ENCODE measurements at regions of chr22 and their contacts with region 1.

Region 1: DNA sequence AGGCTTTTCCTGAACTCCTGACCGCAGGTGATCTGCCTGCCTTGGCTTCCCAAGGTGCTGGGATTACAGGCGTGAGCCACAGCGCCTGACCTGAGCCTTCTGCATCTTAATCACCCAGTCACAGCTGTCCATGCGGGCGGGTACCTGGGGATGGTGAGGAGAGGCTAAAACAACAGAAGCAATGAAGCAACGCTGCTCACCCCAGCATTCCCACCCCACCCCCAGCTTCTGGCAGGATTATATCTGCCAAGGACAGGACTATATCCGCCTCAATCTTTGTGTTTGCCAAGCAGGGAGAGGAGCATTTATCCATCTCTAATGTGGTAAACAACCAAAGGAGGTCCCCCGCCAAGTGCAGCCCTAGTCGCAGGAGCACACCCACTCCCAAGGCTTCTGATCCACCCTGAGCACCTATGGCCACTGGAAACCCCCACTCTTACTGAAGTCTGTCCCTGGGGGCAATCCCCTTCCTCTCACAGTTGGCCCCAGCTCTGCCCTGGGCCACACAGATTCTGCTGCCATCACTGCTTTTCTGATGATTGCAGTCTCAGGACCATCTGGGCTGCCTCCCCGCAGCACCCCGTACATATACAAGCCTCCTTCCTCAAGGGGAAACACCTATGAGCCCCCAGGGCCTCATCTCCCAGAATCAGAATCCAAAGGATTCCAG is 8.8 kb upstream of the LGALS2 start:
- DNase-seq: no peak
- ATAC-seq: no peak
- H3K4me3 Mint-ChIP-seq: no peak overlapping the region
- H3K27ac Mint-ChIP-seq: no peak overlapping the region
- H3K4me1 Mint-ChIP-seq: peaks cover 10% of the 10 kb centered on the region
- H3K27me3 Mint-ChIP-seq: no peaks in the 10 kb centered on the region

Region 2: DNA sequence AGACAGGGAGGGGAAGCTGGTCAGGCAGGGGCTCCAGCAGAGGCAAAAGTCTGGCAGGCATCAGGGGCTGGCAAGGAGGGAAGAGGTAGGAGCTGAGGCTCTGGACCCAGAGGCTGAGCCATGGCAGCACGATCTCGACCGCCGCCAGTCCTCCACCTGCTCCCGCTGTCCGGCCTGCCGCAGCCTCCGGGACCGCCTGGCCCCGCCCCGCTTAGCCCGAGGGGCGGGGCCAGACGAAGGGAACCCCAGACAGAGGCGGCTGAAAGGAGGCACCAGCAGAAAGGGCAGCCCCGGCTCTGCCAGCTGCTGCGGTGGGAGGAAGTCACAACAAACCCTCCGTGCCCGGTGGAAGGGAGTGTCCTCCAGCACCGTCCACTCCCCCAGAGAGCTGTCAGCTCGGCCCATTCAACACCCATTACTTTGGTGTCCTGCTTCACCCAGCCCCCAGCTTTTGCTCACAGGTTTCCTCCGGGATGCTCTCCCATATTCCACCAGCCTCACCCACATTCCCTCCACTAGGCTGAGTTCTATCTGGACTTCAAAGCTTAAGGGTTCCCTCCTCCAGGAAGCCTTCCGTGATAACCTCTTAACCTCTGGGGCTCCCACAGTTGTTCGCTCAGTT is 102.3 kb before region 1 on chr22 and contains the start of gene MFNG:
- CTCF ChIA-PET with region 1: no interaction called
- POLR2A ChIA-PET with region 1: no interaction called
- intact Hi-C with region 1: loop called in 1 of 2 experiments (anchors 1 kb)
- DNase-seq: peak; percentile 89
- ATAC-seq: peak; percentile 70
- H3K4me3 Mint-ChIP-seq: peak within 1 kb of the TSS; percentile 92
- H3K27ac Mint-ChIP-seq: peak within 1 kb of the TSS; percentile 92
- H3K4me1 Mint-ChIP-seq: peaks cover 64% of the 10 kb centered on the region
- H3K27me3 Mint-ChIP-seq: no peaks in the 10 kb centered on the region
- total RNA-seq, gene MFNG: 108 to 125 TPM

Region 3: DNA sequence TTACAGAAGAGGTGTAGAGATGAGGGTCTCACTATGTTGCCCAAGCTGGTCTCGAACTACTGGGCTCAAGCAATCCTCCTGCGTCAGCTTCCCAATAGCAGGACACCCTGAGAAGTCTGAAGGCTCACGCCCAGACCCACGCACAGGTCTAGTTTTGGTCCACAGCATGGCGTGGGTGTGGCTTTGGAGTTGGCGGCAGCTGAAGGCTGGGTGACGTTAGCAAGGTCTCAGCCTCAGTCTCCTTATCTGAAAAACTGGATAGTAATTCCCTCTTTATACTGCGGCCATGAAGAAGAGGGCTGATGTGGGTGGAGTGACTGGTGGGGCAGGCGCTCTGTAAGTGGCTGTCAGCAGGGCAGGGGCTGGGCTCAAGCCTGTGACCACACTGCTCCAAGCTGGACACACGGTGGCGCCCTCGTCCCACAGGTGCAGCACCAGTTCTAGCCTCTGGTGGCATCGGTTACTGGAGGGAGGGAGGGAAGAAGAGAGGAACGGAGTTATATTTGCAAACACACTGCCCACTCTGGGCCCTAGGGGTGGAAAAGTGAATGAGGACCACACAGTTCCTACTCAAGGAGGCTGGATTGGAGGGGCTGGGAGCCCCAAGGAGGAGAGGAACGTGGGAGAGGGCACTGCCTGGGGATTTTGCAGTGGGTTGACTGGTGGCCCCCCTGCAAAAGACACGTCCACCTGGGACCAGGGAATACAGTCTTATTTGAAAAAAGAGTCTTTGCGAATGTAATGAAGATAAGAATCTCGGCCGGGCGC is 49.9 kb before region 1 on chr22:
- CTCF ChIA-PET with region 1: interaction called, 71 read pairs
- POLR2A ChIA-PET with region 1: no interaction called
- intact Hi-C with region 1: loop called (anchors 1 kb)
- DNase-seq: peak; percentile 97
- ATAC-seq: peak; percentile 92
- H3K4me3 Mint-ChIP-seq: no peak overlapping the region
- H3K27ac Mint-ChIP-seq: peak overlapping the region; percentile 55
- H3K4me1 Mint-ChIP-seq: peaks cover 39% of the 10 kb centered on the region
- H3K27me3 Mint-ChIP-seq: peaks cover 12% of the 10 kb centered on the region

Region 4: DNA sequence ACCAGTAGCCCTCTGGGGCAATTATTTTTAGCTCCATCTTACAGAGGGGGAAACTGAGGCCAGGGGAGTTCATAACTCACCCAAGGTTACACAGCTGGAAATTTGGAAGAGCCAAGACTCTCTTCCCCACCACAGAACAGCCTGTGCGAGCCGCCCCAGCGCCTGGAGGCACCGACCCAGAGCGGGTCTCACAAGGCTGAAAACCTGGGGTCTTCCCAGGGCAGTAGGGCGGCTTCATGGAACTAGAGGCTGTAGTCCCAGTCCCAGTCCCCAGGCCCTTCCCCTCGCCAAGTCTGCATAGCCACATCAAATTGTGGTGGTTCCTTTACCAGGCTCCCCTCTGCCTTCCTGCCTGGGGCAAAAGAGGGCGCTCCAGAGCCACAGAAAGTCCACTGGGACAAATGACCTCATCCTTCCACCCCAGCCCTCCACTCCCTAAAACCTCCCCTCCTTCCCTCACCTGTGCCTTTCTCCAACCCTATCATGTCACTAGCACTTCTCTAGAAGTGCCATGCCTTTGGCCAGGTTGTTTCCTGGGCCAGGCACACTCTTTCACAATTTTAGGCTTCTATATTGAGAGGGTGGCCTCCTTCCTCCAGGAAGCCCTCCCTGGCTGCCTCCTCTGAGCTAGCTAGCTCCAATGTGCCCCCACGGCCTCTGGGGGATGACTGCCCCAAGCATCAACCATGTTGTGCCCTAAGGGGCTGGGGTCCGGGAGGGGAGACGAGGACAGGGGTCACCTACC is 43.6 kb before region 1 on chr22:
- CTCF ChIA-PET with region 1: interaction called, 71 read pairs
- POLR2A ChIA-PET with region 1: no interaction called
- intact Hi-C with region 1: loop called in 1 of 2 experiments (anchors 1 kb)
- DNase-seq: peak; percentile 84
- ATAC-seq: peak; percentile 54
- H3K4me3 Mint-ChIP-seq: no peak overlapping the region
- H3K27ac Mint-ChIP-seq: no peak overlapping the region
- H3K4me1 Mint-ChIP-seq: peaks cover 26% of the 10 kb centered on the region
- H3K27me3 Mint-ChIP-seq: peaks cover 8% of the 10 kb centered on the region

Region 5: GRCh38 chr22:37561212-37562048 is 27.3 kb before region 1 on chr22:
- CTCF ChIA-PET with region 1: interaction called, 79 read pairs
- POLR2A ChIA-PET with region 1: interaction called, 12 read pairs
- intact Hi-C with region 1: no loop called
- DNase-seq: peak; percentile 92
- ATAC-seq: peak; percentile 71
- H3K4me3 Mint-ChIP-seq: peak overlapping the region; percentile 57
- H3K27ac Mint-ChIP-seq: peak overlapping the region; percentile 51
- H3K4me1 Mint-ChIP-seq: peaks cover 20% of the 10 kb centered on the region
- H3K27me3 Mint-ChIP-seq: peaks cover 45% of the 10 kb centered on the region

Region 6: GRCh38 chr22:37601540-37602442 is 13.1 kb after region 1 on chr22:
- CTCF ChIA-PET with region 1: interaction called, 61 read pairs
- POLR2A ChIA-PET with region 1: interaction called, 3 read pairs
- intact Hi-C with region 1: no loop called
- DNase-seq: no peak
- ATAC-seq: no peak
- H3K4me3 Mint-ChIP-seq: no peak overlapping the region
- H3K27ac Mint-ChIP-seq: no peak overlapping the region
- H3K4me1 Mint-ChIP-seq: peaks cover 22% of the 10 kb centered on the region
- H3K27me3 Mint-ChIP-seq: no peaks in the 10 kb centered on the region

Region 7: DNA sequence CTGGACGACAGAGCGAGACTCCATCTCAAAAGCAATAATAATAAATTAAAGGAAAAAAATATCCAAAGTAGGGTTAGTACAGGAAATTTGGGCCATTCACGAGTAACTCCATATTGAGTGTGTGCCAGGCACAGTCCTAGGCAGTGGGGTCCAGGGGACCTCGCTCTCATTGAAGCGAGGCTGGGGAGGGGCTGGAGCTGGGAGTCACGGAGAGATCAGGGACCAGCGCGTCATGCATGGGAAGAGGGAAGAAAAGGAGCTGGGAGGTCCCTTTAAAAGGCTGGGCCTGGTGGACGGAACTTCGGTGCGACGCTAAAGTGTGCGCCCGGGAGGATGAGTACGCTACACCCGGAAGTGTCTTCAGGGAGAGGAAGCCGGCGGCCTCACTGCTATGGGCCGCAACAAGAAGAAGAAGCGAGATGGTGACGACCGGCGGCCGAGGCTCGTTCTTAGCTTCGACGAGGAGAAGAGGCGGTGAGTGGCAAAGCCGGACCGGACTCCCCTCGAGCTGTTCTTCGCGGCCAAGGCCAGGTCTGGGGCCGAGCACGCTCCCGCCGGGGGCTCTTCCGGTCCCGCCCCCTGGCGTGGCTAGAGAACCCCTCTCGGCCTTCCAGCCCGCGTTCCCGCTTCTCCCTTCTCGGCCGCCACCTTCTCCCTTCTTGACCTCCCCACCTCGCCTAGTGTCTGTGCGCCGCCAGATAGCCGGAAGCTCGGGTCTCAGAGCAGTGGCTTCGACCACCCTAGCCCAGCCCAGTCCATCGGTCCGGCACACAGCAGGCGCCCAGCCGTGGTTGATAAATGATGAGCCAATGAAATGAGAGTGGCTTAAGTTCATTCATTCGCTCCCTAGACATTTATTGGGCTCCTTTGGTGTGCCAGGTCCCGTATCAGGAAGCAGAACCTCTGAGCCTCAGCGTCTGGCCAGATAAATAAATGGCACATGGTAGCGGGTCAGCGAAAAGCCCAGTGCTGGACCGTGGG is 97.6 kb after region 1 on chr22 and contains the start of gene NOL12:
- CTCF ChIA-PET with region 1: interaction called, 5 read pairs
- POLR2A ChIA-PET with region 1: interaction called, 10 read pairs
- intact Hi-C with region 1: no loop called
- DNase-seq: peak; percentile 84
- ATAC-seq: peak; percentile 82
- H3K4me3 Mint-ChIP-seq: peak within 1 kb of the TSS; percentile 90
- H3K27ac Mint-ChIP-seq: peak within 1 kb of the TSS; percentile 98
- H3K4me1 Mint-ChIP-seq: peaks cover 27% of the 10 kb centered on the region
- H3K27me3 Mint-ChIP-seq: no peaks in the 10 kb centered on the region
- total RNA-seq, gene NOL12: 37.1 to 42.3 TPM